A673 (cell line): ENCODE measurements at regions of chr4 and their contacts with region 1.

Region 1: DNA sequence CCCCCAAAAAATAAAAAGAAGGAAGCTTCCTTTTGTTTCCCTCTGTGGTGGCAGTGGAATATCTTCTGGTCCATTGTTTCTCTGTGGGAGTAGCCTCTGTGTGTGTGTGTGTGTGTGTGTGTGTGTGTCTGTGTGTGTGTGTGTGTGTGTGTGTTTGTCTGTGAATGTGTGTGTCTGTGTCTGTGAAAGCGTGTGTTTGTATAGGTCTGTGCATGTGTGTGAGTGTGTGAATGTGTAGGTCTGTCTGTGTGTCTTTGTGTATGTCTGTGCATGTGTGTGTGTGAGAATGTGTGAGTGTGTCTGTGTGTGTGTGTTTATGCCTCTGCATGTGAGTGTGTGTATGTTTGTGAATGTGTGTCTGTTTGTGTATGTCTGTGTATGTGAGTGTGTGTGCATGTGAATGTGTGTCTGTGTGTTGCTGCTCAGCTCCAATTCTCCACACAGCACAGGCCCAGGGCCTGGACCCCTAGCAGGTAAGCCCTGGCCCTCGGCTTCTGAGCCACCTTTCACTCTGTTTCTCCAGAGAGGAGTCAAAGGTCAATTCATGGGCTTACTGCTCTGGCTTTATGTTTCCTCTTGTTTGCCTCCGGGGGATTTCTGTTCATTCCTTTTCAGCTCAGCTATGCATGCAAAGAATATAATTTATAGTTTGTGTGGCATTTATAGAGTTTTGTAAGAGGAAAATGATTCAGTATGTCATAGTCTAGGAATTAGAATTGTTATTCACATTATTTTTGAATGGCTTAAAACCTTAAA is 89.8 kb downstream of the UCHL1 start:
- DNase-seq: peak; percentile 39
- H3K4me3 ChIP-seq: no peak overlapping the region
- H3K27ac ChIP-seq: no peak overlapping the region
- H3K4me1 ChIP-seq: no peaks in the 10 kb centered on the region
- H3K27me3 ChIP-seq: no peaks in the 10 kb centered on the region
- CTCF ChIP-seq: no peak

Region 2: DNA sequence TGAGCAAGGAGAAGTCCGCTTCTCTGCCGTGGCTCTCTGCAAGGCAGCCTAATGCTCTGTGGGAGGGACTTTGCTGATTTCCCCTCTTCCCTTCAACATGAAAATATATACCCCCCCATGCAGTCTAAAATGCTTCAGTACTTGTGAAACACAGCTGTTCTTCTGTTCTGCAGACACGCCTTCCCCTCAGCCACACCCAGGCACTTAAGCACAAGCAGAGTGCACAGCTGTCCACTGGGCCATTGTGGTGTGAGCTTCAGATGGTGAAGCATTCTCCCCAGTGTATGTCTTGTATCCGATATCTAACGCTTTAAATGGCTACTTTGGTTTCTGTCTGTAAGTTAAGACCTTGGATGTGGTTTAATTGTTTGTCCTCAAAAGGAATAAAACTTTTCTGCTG is 78.5 kb before region 1 on chr4:
- CTCF ChIA-PET with region 1: no interaction called
- POLR2A ChIA-PET with region 1: interaction called, 10 read pairs
- intact Hi-C with region 1: no loop called
- DNase-seq: no peak
- H3K4me3 ChIP-seq: no peak overlapping the region
- H3K27ac ChIP-seq: no peak overlapping the region
- H3K4me1 ChIP-seq: no peaks in the 10 kb centered on the region
- H3K27me3 ChIP-seq: no peaks in the 10 kb centered on the region
- CTCF ChIP-seq: no peak

Region 3: GRCh38 chr4:42396752-42397634 is 1050.5 kb after region 1 on chr4 and contains the start of gene SHISA3:
- CTCF ChIA-PET with region 1: no interaction called
- POLR2A ChIA-PET with region 1: no interaction called
- intact Hi-C with region 1: no loop called
- DNase-seq: peak; percentile 18
- H3K4me3 ChIP-seq: peak within 1 kb of the TSS; percentile 44
- H3K27ac ChIP-seq: no peak within 1 kb of the TSS
- H3K4me1 ChIP-seq: no peaks in the 10 kb centered on the region
- H3K27me3 ChIP-seq: peaks cover 68% of the 10 kb centered on the region
- CTCF ChIP-seq: no peak
- total RNA-seq, gene SHISA3: 0.26 and 0.39 TPM in 2 replicates